Heart left ventricle (tissue), 16 donors: ENCODE measurements at regions of chr20 and their contacts with region 1.

Region 1: DNA sequence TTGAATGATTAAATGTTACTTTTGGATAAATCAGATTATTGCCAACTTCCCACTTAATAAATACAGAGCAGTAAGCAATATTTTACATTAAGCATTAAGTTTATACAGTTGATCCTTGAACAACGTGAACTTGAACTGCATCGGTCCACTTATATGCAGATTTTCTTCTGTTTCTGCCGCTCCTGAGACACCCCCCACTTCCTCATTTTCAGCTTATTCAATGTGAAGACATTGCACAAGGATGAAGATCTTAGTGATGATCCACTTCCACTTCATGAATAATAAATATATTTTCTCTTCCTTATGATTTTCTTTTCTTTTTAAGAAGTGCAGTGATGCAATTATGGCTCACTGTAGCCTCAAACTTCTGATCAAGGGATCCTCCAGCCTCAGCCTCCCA is 167.2 kb downstream of the LINC00237 start:
- DNase-seq: no peak
- ATAC-seq: no peak
- H3K4me3 ChIP-seq: no peak overlapping the region
- H3K27ac ChIP-seq: no peak overlapping the region
- H3K4me1 ChIP-seq: no peaks in the 10 kb centered on the region
- H3K27me3 ChIP-seq: peaks cover 0 to 10% (median 0%) of the 10 kb centered on the region in 9 donors
- CTCF ChIP-seq: no peak
- POLR2A ChIP-seq: no peak

Region 2: DNA sequence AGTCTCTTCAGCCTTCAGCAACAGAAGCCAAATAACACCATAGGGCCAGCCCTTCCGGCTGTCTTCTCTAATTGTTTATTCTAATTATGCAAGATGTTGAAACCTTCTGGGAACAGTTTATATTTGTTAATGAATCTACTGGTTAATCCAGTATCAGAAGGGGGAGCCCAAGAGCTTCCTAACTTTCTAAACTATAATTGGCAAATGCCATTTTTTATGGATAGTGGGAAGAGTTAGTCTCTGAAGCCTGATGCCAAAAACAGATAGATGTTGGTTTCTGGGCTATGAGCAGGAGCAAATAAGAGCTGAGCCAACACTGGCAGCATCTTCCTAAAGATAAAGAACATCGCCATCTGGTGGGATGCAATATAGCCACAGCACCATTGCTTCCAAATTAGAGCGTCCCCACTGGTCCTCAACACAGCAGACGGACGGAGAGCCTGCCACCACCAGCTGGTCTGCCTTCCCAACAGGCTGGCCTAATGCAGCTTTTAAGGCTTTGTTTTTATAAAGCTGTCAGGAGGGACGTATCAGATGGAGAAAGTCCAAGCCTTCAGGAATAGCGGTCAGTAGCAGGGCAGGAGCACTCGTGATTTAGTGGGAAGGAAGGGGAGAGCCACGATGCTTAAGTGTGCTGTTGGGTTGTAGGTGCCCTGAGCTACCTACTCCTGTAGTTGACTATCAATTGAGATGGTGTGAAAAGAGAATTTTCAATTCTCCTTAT is 345.4 kb before region 1 on chr20:
- intact Hi-C with region 1: no loop called
- DNase-seq: no peak
- ATAC-seq: peak; percentile 37 to 59 (median 46)
- H3K4me3 ChIP-seq: no peak overlapping the region
- H3K27ac ChIP-seq: no peak overlapping the region
- H3K4me1 ChIP-seq: peaks cover 0 to 13% (median 1%) of the 10 kb centered on the region in 12 donors
- H3K27me3 ChIP-seq: no peaks in the 10 kb centered on the region
- CTCF ChIP-seq: peak in 9 of 12 donors; percentile 4 to 55 (median 26)
- POLR2A ChIP-seq: no peak

Region 3: GRCh38 chr20:20993372-20993771 is 54.4 kb after region 1 on chr20:
- intact Hi-C with region 1: loop called in 2 of 10 experiments (anchors 10 kb)
- DNase-seq: no peak
- ATAC-seq: no peak
- H3K4me3 ChIP-seq: no peak overlapping the region
- H3K27ac ChIP-seq: no peak overlapping the region
- H3K4me1 ChIP-seq: no peaks in the 10 kb centered on the region
- H3K27me3 ChIP-seq: peaks cover 0 to 20% (median 0%) of the 10 kb centered on the region in 9 donors
- CTCF ChIP-seq: no peak
- POLR2A ChIP-seq: no peak

Region 4: DNA sequence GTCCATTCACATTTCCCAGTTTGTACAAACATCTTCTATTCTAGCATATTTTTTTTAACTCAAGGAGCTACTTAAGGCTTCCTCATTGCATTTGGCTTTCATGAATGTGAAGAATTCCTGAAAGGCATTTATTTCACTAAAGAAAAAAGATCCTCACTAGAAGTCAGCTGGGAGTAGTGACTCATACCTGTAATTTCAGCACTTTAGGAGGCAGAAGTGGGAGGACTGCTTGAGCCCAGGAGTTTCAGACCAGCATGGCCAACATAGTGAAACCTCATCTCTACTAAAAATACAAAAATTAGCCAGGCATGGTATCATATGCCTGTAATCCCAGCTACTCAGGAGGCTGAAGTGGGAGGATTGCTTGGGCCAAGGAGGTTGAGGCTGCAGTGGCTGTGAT is 333.3 kb after region 1 on chr20:
- intact Hi-C with region 1: no loop called
- DNase-seq: no peak
- ATAC-seq: no peak
- H3K4me3 ChIP-seq: no peak overlapping the region
- H3K27ac ChIP-seq: no peak overlapping the region
- H3K4me1 ChIP-seq: no peaks in the 10 kb centered on the region
- H3K27me3 ChIP-seq: peaks cover 0 to 13% (median 0%) of the 10 kb centered on the region in 9 donors
- CTCF ChIP-seq: no peak
- POLR2A ChIP-seq: no peak